ENCODE measurements at regions of chr1 and their contacts with region 1.

Region 1: GRCh38 chr1:155250633-155251449 is 4.4 kb downstream of the ENTREP3 start:
- DNase-seq: peak; percentile 98

Region 2: GRCh38 chr1:155208541-155209311 is 42.1 kb before region 1 on chr1 and contains the start of gene MTX1:
- CTCF ChIA-PET with region 1: interaction called, 10 read pairs
- POLR2A ChIA-PET with region 1: interaction called, 5 read pairs
- DNase-seq: peak; percentile 90

Region 3: GRCh38 chr1:155267373-155267772 is 16.5 kb after region 1 on chr1:
- CTCF ChIA-PET with region 1: interaction called, 15 read pairs
- POLR2A ChIA-PET with region 1: interaction called, 35 read pairs
- DNase-seq: no peak

Region 4: GRCh38 chr1:155308493-155309422 is 57.9 kb after region 1 on chr1 and contains the start of gene FDPS:
- CTCF ChIA-PET with region 1: interaction called, 29 read pairs
- POLR2A ChIA-PET with region 1: interaction called, 15 read pairs
- DNase-seq: peak; percentile 98

Region 5: GRCh38 chr1:155323798-155324610 is 73.2 kb after region 1 on chr1:
- CTCF ChIA-PET with region 1: interaction called, 62 read pairs
- POLR2A ChIA-PET with region 1: interaction called, 43 read pairs
- DNase-seq: peak; percentile 95